Sciatic nerve (tissue), 2 donors: ENCODE measurements at regions of chr6 and their contacts with region 1.

Region 1: GRCh38 chr6:85300581-85300980 is 149.3 kb upstream of the NT5E start:
- DNase-seq: no peak
- ATAC-seq: no peak

Region 2: GRCh38 chr6:85113923-85114580 is 186.5 kb before region 1 on chr6:
- intact Hi-C with region 1: no loop called
- DNase-seq: no peak
- ATAC-seq: peak; percentile 75

Region 3: GRCh38 chr6:85561750-85562357 is 261.3 kb after region 1 on chr6:
- intact Hi-C with region 1: no loop called
- DNase-seq: no peak
- ATAC-seq: no peak

Region 4: DNA sequence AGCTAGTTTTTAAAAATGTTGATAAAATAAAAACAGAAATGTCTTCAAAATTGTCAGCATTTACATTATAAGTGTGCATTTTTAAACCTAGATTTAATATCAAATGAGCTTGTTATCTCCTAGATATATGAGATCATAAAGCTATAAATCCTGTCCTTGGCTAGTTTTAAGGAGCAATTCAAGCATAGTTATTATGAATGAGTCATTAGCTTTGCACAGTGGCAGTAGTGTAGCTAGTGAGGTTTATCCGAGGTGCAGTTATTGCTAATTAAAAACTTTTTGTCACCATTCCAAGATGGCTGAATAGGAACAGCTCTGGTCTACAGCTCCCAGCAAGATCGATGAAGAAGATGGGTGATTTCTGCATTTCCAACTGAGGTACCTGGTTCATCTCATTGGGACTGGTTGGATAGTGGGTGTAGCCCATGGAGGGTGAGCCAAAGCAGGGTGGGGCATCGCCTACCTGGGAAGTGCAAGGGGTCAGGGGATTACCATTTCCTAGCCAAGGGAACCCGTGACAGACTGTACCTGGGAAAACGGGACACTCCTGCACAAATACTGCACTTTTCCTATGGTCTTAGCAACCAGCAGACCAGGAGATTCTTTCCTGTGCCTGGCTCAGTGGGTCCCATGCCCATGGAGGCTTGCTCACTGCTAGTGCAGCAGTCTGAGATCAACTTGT is 450.9 kb after region 1 on chr6:
- intact Hi-C with region 1: loop called (anchors 5 kb)
- DNase-seq: no peak
- ATAC-seq: no peak